ENCODE measurements at regions of chrX and their contacts with region 1.

Region 1: GRCh38 chrX:118847676-118848075 is 24.1 kb downstream of the ZCCHC12 start:
- DNase-seq: peak; percentile 80
- ATAC-seq: peak; percentile 81
- H3K4me3 ChIP-seq: no peak overlapping the region
- H3K27ac ChIP-seq: no peak overlapping the region
- H3K4me1 ChIP-seq: no peaks in the 10 kb centered on the region
- H3K27me3 ChIP-seq: no peaks in the 10 kb centered on the region
- CTCF ChIP-seq: peak; percentile 80

Region 2: GRCh38 chrX:118862091-118862490 is 14.4 kb after region 1 on chrX:
- CTCF ChIA-PET with region 1: no interaction called
- POLR2A ChIA-PET with region 1: no interaction called
- intact Hi-C with region 1: no loop called
- DNase-seq: no peak
- ATAC-seq: no peak
- H3K4me3 ChIP-seq: no peak overlapping the region
- H3K27ac ChIP-seq: no peak overlapping the region
- H3K4me1 ChIP-seq: peaks cover 22% of the 10 kb centered on the region
- H3K27me3 ChIP-seq: no peaks in the 10 kb centered on the region
- CTCF ChIP-seq: no peak

Region 3: DNA sequence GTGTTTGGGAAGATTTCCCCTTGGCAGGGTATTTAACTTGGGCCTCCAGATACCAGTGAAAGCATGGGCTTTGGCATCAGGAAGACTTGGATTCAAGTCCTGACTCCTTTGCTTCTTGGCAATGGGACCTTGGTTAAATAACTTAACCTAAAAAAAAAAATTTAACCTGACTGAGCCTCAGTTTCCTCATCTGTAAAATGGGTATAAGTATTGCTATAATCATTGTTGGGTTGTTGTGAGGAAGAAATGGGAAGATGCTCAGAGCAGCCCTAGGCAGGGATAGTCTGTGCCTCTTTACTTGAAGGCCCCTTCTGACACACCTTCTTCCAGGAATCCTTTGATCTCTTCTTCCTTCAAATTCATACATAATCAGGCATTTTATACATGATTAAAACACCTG is 46.2 kb after region 1 on chrX:
- CTCF ChIA-PET with region 1: no interaction called
- POLR2A ChIA-PET with region 1: no interaction called
- intact Hi-C with region 1: loop called (anchors 5 kb)
- DNase-seq: no peak
- ATAC-seq: no peak
- H3K4me3 ChIP-seq: no peak overlapping the region
- H3K27ac ChIP-seq: no peak overlapping the region
- H3K4me1 ChIP-seq: no peaks in the 10 kb centered on the region
- H3K27me3 ChIP-seq: no peaks in the 10 kb centered on the region
- CTCF ChIP-seq: no peak

Region 4: DNA sequence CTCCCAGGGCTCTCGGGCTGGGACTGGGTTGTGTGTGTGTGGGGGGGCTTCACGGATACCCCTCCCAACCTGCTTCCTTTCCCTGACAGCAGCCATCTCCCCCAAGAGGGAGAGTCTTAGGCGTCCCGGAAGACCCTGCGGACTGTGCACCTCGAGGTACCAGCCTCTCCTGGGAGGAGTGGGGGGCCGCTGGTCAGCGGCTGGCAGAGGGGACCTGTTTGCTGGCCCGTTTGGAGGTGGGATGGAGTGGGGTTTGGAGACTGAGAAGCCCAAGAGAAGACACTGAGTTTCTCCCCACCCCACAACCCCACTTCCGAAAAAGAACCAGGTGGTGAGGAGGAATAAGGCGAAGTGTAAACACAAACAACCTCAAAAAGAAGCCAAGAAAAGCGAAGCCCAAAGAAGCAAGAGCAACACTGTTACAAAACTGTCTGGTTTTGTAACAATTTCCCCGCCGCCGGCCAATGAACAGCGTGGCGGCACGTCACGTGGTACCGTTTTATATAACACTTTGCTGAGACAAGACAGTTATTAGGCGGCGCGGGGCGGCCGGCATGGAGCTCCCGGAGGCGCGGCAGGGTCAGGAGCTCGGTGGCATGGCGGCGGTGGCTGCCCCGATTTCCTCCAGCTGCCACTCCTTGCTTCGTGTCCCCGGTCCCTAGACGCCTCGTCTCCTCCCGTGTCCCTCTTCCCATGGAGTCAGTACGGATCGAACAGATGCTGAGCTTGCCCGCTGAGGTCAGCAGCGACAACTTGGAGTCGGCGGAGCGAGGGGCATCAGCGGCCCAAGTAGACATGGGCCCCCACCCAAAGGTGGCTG is 126.6 kb after region 1 on chrX and contains the start of gene LONRF3:
- CTCF ChIA-PET with region 1: no interaction called
- POLR2A ChIA-PET with region 1: no interaction called
- intact Hi-C with region 1: loop called (anchors 5 kb)
- DNase-seq: peak; percentile 67
- ATAC-seq: peak; percentile 34
- H3K4me3 ChIP-seq: peak within 1 kb of the TSS; percentile 78
- H3K27ac ChIP-seq: peak within 1 kb of the TSS; percentile 56; the same call in 1 of the 2 replicates
- H3K4me1 ChIP-seq: peaks cover 25% of the 10 kb centered on the region
- H3K27me3 ChIP-seq: no peaks in the 10 kb centered on the region
- CTCF ChIP-seq: no peak
- total RNA-seq, gene LONRF3: 14.5 and 15.6 TPM in 2 replicates

Region 5: DNA sequence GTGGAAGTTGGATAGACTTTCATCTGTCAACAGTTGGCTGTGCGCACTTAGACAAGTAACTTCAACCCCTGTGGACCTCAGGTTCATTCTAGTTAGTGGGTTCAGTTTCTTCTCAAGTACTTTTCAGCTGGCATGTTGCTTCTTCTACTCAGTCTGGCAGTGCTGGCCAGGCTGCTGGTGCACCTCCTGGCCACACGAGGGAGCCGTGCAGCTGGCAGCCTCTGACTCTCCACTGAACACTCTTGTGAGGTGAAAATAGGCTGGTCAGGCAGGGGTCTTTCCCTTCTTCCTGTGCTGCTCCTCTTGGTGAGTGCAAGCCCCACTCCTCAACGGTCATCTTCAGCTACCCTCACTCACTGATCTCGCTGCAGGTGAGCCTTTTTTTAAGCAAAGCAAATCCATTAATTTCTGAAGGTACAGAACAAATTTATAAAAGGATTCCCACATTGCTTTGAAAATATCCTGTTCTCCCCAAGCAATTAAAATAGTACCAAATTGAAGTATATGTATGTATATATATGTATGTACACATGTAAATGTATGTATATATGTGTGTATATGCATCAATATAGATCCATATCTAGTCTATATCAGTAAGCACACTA is 157.3 kb after region 1 on chrX:
- CTCF ChIA-PET with region 1: no interaction called
- POLR2A ChIA-PET with region 1: no interaction called
- intact Hi-C with region 1: loop called (anchors 1 kb)
- DNase-seq: peak; percentile 62
- ATAC-seq: peak; percentile 89
- H3K4me3 ChIP-seq: no peak overlapping the region
- H3K27ac ChIP-seq: no peak overlapping the region
- H3K4me1 ChIP-seq: no peaks in the 10 kb centered on the region
- H3K27me3 ChIP-seq: no peaks in the 10 kb centered on the region
- CTCF ChIP-seq: peak; percentile 83

Region 6: DNA sequence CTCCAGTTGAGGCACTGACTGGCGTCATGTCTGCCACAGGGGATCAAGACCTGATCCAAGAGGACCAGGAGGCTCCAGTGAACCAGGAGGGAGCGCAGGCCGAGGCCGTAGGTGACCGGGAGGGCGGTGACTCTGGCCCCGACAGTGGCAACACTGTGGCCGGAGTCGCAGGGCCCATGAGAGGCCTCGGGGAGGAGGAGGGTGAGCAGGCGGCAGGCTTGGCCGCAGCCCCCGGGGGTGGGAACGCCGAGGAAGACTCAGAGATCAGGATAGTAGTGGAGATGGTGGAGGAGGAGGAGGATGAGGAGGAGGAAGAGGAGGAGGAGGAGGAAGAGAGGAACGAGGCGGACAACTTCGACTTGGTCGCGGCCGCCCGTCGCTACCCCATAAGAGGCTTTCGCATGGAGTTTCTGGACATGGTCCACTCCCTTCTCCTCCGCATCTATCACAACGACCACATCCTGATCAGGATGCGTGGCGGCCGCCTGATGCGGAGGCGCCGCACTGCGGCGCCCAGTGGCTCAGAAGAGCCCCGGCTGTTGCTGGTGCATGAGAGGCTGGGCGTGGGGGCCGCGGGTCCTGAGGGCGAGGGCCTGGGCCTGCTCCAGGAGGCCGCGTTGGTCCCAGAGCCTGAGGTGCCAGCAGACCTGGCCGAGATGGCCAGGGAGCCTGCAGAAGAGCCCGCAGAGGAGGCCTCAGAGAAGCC is 225.7 kb after region 1 on chrX:
- CTCF ChIA-PET with region 1: no interaction called
- POLR2A ChIA-PET with region 1: no interaction called
- intact Hi-C with region 1: no loop called
- DNase-seq: no peak
- ATAC-seq: no peak
- H3K4me3 ChIP-seq: no peak overlapping the region
- H3K27ac ChIP-seq: no peak overlapping the region
- H3K4me1 ChIP-seq: peaks cover 11% of the 10 kb centered on the region; the same call in 1 of the 2 replicates
- H3K27me3 ChIP-seq: no peaks in the 10 kb centered on the region
- CTCF ChIP-seq: no peak

Measured in PC-3 (cell line).